Activated naive CD4-positive, alpha-beta T cell treated with anti-CD3 and anti-CD28 coated beads for 36 hours (primary cell): ENCODE measurements at regions of chr6 and their contacts with region 1.

Region 1: DNA sequence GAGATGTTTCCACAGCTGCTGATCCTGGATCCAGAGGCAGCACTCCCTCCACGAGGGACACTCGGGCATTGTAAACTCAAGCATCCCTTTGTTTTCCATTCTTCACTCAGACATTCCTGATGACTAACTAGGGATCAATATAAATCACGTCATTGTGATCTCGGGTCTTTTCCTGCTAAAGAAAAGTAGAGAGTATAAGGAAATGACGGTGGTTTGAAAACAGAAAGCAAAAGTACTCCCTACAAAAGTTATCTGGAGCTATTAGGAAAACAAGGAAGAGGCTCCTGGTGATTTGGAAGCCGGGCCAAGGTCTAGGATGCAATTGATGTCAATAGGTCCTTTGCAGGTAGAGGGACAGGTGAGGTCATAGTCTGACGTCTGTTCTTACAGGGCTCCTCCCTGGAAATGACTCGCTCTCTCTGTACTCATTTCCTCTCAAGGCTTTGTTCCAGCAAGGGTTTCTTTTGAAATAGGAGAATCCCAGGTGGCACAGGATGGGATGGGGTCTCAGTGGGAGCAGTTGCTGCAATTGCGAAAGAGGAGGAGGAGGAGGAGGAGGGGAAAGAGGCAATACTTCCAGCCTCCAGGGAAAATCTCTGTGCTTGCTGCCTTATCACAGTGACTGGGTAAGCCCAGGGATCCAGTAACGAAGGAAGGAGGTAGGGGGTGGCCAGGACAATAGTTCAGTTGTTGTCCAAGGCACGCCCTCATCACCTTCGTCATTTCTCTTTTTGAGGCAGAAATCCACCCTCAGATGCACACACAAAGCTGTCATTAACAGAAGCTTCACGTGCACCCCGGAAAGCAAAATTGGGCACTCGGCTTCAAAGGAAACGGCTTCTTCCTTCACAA is 222.9 kb downstream of the LY86 start:
- DNase-seq: peak; percentile 79
- H3K4me3 Mint-ChIP-seq: peak overlapping the region; percentile 66
- H3K27ac Mint-ChIP-seq: peak overlapping the region; percentile 72
- H3K4me1 Mint-ChIP-seq: peaks cover 20% of the 10 kb centered on the region
- H3K27me3 Mint-ChIP-seq: no peaks in the 10 kb centered on the region

Region 2: DNA sequence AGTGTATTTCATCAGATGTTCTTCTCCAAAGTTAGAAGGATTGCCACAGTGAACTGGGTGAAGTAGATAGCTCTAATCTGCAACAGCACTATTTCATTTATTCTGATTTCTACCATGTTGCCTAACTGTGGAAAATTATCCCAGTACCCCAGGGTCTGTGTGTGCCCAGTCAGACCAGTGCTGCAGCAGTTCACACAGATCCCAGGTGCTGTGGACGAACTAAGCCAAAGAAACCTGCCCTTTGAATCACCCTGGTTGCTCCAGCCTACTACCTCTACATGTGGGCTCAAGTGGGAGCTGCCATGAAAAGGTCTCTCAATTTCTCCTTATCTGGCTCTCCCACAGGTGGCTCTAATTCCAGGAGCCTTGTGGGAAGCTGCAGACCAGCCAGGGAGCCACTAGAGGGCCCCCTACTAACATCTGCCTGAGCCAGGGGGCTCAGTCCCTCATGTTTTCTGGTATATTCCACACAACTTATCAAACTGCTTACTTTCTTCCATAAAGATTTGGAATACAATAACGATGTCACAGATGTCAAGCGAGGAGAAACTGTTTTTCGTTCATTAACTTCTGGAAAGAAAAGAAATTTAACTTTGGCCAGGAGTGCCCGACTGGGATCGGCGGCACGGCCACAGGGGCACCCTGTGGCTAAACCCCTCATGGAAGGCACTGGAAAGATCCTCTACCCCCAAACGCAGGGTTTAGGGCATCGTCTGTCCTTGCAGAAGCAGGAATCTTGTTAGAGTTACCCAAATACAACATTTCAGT is 254.5 kb before region 1 on chr6:
- CTCF ChIA-PET with region 1: no interaction called
- intact Hi-C with region 1: loop called (anchors 5 kb)
- DNase-seq: peak; percentile 68
- H3K4me3 Mint-ChIP-seq: no peak overlapping the region
- H3K27ac Mint-ChIP-seq: no peak overlapping the region
- H3K4me1 Mint-ChIP-seq: peaks cover 44% of the 10 kb centered on the region
- H3K27me3 Mint-ChIP-seq: no peaks in the 10 kb centered on the region

Region 3: DNA sequence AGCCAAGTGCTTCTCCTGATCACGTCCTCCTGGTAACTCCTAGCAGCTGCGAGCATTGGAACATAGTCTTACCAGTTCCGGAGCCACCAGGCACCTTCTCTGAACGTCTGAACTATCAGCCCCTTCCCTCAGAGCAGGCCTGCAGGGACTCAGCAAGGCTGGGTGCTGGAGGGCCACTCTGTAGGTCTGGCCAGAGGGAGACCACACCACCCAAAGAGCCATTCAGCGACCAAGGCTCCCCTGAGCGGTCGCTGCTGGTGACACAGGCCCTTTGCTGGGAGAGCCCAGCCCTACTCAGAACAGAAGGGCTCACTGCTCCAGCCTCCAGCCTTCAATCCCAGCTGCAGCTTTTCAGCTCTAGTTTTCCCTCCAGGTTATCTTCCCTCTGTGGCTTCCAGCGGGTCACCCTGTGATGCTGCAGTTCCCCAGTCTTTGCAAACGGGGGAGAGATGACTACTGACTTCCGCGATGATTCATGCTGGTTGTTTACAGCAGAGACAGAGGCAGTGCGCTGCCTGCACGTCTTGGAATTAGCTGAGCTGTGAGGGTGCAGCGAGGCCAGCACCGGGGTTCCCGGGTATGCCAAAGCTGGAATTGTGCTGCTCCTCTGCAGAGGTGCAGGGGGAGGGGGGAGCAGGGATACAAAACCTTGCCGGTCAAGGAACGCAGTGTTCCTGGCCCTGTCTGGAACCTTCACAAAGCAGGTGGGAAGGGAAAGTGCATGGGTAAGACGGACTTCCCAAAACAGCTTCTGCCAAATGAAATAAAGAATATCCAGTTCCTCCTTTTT is 61.5 kb before region 1 on chr6:
- CTCF ChIA-PET with region 1: no interaction called
- intact Hi-C with region 1: loop called (anchors 1 kb)
- DNase-seq: peak; percentile 79
- H3K4me3 Mint-ChIP-seq: no peak overlapping the region
- H3K27ac Mint-ChIP-seq: no peak overlapping the region
- H3K4me1 Mint-ChIP-seq: peaks cover 23% of the 10 kb centered on the region
- H3K27me3 Mint-ChIP-seq: no peaks in the 10 kb centered on the region

Region 4: GRCh38 chr6:7086488-7086887 is 275.1 kb after region 1 on chr6:
- CTCF ChIA-PET with region 1: no interaction called
- intact Hi-C with region 1: loop called (anchors 1 kb)
- DNase-seq: peak; percentile 65
- H3K4me3 Mint-ChIP-seq: peak overlapping the region; percentile 17
- H3K27ac Mint-ChIP-seq: no peak overlapping the region
- H3K4me1 Mint-ChIP-seq: peaks cover 29% of the 10 kb centered on the region
- H3K27me3 Mint-ChIP-seq: no peaks in the 10 kb centered on the region

Region 5: DNA sequence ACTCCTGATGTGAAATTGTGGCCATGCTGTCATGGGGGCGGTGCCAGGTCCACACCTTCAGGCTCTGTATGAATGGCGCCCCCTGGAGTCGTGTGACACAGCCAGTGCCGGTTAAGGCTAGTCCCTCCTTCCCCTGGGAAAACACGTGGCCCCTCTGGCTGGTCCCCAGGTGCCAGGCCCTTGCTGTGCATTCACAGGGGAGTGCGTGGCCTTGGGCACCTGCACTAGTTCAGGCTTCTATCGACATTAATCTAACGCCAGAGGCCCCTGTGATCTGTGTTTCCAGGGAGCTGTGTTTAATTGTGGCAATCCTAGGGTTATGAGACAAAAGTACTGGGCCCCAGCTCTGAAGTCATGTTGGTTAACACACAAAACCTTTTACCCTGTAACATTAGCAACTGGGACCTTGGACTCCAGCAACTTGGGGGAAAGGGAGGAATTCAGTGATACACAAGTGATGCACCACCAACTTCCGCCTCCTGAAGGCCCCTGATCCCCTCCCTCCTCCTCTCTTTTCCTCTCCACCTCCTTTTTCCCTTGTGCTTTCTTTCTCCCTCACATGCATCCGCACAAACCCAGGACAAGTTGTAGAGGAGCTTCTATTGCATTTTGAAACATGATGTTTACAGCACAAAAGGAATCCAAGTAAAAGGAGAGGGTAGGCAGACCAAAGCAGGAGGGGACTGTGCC is 427.7 kb after region 1 on chr6:
- CTCF ChIA-PET with region 1: no interaction called
- intact Hi-C with region 1: loop called (anchors 1 kb)
- DNase-seq: peak; percentile 93
- H3K4me3 Mint-ChIP-seq: no peak overlapping the region
- H3K27ac Mint-ChIP-seq: peak overlapping the region; percentile 15
- H3K4me1 Mint-ChIP-seq: peaks cover 27% of the 10 kb centered on the region
- H3K27me3 Mint-ChIP-seq: no peaks in the 10 kb centered on the region